ENCODE measurements at regions of chr3 and their contacts with region 1.

Region 1: DNA sequence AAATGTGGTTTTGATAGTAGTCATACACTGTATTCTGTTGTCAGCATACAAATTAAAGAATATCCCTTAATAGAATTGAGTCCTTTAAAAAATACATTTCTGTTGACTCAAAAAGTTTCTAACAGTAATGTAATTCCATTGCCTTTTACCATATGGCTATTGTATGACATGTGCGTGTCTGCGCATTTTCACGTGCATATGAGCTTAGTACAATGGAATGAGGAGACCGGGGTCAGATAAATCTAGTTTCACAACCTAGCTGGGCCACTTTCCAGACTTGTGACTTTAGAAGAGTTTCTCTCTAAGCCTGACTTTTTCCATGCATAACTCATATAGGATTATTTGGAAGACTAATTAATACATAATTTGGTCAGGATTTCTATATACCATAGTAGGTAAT is 38.7 kb downstream of the ZBTB38 start:
- DNase-seq: no peak

Region 2: GRCh38 chr3:141441381-141442364 is 34.6 kb after region 1 on chr3:
- intact Hi-C with region 1: loop called in 1 of 2 experiments (anchors 5 kb)
- DNase-seq: peak; percentile 89